ENCODE measurements at regions of chr13 and their contacts with region 1.

Region 1: DNA sequence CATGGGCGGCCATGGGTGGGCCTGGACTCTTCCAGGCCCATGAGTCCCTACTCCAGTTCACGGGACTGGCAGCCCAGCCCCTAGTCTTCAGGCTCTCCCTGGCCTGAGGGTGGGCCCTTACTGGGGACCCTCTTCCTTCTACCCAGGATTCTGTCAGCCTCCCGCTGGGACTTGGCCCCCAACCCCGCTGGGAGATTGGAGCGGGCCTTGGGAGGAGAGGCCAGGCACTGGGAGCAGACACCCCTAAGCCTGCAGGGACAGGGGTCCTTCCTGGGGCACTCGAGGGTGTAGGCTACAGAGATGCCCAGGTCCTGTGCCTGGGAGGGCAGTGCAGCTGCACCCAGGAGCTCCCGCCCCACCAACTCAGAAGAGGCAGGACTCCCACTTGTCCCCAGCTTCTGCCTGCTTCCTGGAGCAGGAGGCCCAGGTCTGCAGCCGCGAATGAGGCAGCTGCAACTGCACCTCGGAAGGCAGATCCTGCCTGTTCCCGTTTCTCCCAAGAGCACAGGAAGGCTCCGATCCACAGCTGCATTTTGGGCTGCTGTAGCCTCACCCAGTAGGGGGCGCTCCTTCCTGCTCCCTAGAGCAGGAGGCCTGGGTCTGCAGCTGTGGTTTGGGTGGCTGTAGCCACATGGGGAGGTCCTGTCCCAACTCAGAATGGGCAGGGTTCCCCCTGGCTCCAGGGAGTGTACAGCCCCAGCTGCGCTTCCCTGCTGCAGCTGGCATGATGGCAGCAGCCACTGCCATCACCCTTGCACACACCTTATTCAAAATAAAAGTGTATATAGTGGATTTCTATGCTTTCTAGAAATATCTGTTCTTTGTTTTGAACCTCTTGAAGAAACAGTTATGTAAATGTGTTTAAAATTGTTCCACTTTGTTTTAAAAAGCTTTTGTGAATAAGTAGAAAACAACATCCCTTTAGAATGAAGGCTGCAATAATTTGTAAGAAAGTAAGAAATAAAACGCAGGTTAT is 46.8 kb downstream of the TEX26 start:
- DNase-seq: peak; percentile 52
- H3K4me3 Mint-ChIP-seq: no peak overlapping the region
- H3K27ac Mint-ChIP-seq: no peak overlapping the region
- H3K4me1 Mint-ChIP-seq: peaks cover 3% of the 10 kb centered on the region
- H3K27me3 Mint-ChIP-seq: peaks cover 29% of the 10 kb centered on the region

Region 2: GRCh38 chr13:30712536-30713532 is 266.4 kb before region 1 on chr13:
- CTCF ChIA-PET with region 1: no interaction called
- POLR2A ChIA-PET with region 1: no interaction called
- DNase-seq: peak; percentile 29
- H3K4me3 Mint-ChIP-seq: no peak overlapping the region
- H3K27ac Mint-ChIP-seq: peak overlapping the region; percentile 37
- H3K4me1 Mint-ChIP-seq: peaks cover 27% of the 10 kb centered on the region
- H3K27me3 Mint-ChIP-seq: no peaks in the 10 kb centered on the region

Region 3: GRCh38 chr13:30968846-30969245 is 10.4 kb before region 1 on chr13:
- CTCF ChIA-PET with region 1: interaction called, 17 read pairs
- POLR2A ChIA-PET with region 1: no interaction called
- DNase-seq: no peak
- H3K4me3 Mint-ChIP-seq: no peak overlapping the region
- H3K27ac Mint-ChIP-seq: no peak overlapping the region
- H3K4me1 Mint-ChIP-seq: no peaks in the 10 kb centered on the region
- H3K27me3 Mint-ChIP-seq: peaks cover 45% of the 10 kb centered on the region

Measured in activated CD4-positive, alpha-beta memory T cell treated with anti-CD3 and anti-CD28 coated beads, Interleukin-2, amount 10 ng/mL, durations not matched to agents 7 days and 5 days (primary cell).